Colonic mucosa (tissue), 4 donors: ENCODE measurements at regions of chr3 and their contacts with region 1.

Region 1: GRCh38 chr3:57434041-57434440 is 110.1 kb downstream of the DNAH12 start:
- DNase-seq: no peak
- H3K4me3 ChIP-seq: no peak overlapping the region
- H3K27ac ChIP-seq: no peak overlapping the region
- H3K4me1 ChIP-seq: no peaks in the 10 kb centered on the region
- H3K27me3 ChIP-seq: no peaks in the 10 kb centered on the region
- CTCF ChIP-seq: peak; percentile 28

Region 2: DNA sequence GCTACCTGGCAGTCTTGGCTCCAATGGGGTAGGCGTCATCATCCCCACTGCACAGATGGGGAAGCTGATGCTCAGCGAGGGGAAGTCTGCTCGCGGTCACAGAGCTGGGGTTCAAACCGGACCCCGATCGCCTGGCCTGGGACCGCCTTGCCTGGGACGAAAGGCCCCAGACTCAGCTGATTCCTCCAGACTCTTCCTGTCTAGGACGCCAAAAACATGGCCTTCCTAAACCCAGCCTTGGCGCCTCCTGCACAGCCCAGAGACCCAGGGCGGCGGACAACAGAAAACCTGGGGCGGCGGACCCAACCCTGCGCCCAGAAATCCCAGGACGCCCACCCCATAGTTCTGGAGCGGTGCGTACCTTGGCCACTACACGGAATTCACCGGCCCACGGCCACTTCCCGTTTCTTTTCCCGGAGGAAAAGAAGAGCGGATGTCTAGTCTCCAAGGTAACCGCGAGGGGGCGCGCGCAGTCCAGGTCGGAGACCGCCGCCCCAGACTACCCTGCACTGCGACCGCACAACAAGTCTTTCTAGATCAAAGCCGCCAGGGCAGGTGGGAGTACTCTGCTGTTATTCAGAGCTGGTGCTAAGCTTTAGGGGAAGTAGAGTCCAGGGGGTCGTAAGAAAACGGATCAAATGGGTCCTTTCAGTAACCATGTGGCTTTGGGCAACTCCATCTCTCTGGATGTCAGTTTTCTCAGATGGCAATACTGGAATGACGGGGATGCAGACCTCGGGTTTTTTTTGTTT is 264.0 kb before region 1 on chr3:
- intact Hi-C with region 1: no loop called
- DNase-seq: peak; percentile 69
- H3K4me3 ChIP-seq: peak overlapping the region; percentile 33
- H3K27ac ChIP-seq: no peak overlapping the region
- H3K4me1 ChIP-seq: no peaks in the 10 kb centered on the region
- H3K27me3 ChIP-seq: no peaks in the 10 kb centered on the region
- CTCF ChIP-seq: peak; percentile 83

Region 3: DNA sequence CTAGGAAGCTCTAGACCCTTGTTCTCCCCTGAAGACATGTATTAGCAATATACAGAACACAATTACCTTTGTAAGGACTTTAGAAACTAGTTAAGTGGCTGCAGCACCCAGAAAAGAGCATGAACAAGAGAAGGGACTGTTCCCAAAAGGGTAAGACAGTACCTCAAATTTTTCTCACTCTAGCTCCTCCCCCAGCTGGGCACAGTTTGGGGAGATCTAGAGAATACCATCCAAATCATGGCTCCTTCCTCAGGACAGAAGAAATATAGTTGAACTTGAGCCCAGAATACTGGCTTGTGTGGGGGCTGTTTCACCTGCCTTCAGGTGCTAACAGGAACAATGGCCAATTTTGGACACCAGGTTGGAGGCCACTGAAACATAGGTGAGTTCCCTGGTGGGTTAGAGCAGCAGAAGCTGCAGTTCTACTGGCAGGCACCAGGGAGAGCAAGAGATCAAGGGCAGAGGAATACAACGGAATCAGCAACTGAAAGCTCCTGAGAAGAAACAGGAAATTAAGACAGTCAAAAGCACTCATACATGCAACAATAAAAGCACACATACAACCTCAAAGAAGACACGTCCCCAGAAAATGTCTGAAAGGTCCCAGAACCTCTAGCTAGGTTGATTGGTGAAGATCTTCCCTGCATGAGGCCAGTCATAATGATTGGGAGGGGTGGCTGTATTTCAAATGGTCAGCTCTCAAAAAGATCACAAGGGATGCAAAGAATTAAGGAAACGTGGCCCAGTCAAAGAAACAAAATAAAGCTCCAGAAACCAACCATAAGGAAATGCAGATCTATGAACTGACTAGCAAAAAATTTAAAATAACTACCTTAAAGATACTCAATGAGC is 36.6 kb before region 1 on chr3:
- intact Hi-C with region 1: loop called (anchors 5 kb)
- DNase-seq: peak; percentile 57
- H3K4me3 ChIP-seq: no peak overlapping the region
- H3K27ac ChIP-seq: no peak overlapping the region
- H3K4me1 ChIP-seq: no peaks in the 10 kb centered on the region
- H3K27me3 ChIP-seq: no peaks in the 10 kb centered on the region
- CTCF ChIP-seq: peak; percentile 76